Gastrocnemius medialis (tissue), 4 donors: ENCODE measurements at regions of chr1 and their contacts with region 1.

Region 1: DNA sequence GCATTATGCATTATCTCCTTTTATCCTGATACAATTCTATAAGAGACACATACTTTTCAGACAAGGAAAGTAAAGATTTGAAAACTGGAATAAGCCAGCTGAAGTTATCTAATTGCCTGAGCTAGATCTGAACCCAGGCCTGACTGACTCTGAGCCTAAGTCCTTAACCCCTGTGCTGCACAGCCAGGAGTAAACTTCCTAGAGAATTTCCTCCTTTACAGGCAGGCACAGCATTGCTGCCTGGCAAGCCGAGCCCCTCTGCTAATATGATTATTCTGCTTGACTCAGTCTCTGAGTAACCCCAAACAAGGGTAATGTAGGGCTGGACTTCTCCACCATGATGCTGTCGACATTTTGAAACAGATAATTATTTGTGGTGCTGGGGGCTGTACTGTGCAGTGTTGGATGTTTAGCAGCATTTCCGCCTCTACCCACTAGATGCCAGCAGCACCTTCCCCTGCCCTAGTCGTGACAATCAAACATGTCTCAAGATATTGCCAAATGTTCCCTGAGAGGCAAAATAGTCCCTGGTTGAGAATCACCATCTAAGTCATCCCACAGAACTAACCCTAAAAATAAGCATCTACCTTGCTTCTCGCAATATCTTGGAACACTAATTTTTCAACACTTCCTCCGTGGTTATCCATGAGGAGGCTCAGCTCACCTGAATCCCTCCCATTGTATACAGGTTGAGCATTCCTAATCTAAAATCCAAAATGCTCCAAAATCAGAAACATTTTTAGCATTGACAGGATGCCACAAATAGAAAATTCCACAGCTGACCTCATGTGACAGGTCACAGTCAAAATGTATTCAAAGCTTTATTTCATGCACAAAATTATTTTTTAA is 18.5 kb downstream of the CAMK1G start:
- DNase-seq: peak; percentile 37 to 52
- ATAC-seq: peak; percentile 98 to 99
- H3K4me3 ChIP-seq: no peak overlapping the region
- H3K27ac ChIP-seq: no peak overlapping the region
- H3K4me1 ChIP-seq: no peaks in the 10 kb centered on the region
- H3K27me3 ChIP-seq: no peaks in the 10 kb centered on the region
- CTCF ChIP-seq: peak; percentile 76 to 90 (median 83)
- POLR2A ChIP-seq: no peak

Region 2: DNA sequence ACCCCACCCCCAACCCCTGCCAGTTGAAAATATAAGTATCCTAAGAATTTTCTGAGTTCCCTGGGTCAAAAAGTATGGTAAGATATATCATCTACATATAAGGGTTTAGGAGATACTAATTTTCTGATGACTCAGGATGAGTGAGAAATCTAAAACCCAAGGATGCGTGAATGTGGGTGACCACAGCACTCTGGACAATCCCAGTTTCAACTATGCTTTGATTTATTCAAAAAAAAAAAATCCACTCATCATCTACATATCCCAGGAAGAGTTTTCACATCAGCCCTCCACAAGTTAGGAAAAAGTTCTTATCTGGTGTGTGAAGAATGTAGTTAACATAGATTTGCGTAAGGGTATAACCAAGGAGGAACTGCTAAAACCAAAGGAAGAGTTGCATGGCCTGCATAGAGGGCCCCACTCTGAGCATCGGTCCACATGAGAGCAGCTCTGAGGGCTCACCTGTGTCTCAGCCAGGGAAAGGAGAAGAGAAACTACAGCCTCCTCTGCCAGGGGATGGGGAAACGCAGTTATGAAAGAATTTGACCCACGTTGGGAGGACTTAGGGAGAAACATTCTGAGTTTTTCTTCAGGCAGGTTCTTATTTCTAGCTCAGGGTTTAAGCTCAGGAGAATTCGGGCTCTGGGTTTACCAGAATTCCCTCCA is 31.4 kb after region 1 on chr1:
- in situ Hi-C with region 1: loop called in 1 of 4 experiments (anchors 5 kb)
- intact Hi-C with region 1: no loop called
- DNase-seq: no peak
- ATAC-seq: no peak
- H3K4me3 ChIP-seq: no peak overlapping the region
- H3K27ac ChIP-seq: no peak overlapping the region
- H3K4me1 ChIP-seq: peaks cover 25 to 38% of the 10 kb centered on the region in 2 donors
- H3K27me3 ChIP-seq: no peaks in the 10 kb centered on the region
- CTCF ChIP-seq: no peak
- POLR2A ChIP-seq: no peak

Region 3: DNA sequence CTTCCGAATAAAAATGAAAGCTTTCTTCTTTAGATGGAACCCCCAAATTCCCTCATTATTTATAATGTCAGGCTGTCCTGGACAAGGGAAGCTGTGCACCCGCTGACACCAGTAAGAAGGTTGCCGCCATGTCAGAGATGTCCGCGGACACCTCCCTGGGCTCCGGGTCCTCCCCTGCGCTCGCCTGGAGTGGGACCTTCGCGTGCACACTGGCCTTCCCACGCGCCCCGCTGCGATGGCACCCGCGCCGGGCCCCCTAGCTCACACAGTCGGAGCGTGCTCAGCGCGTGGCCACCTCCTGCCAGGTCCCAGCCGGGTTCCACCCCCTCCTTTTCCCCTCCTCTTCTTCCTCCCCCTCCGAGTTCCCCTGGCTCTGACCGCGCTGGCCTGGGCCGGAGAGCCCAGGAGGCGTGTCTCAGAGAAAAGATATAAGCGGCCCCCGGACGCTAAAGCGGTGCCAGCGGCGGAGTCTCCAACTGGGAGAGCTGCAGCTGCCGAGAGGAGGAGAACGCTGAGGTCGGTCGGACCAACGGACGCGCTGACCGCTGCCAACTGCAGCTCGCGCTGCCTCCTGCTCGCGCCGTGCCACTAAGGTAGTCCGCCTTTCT is 73.0 kb after region 1 on chr1 and contains the start of gene G0S2:
- in situ Hi-C with region 1: no loop called
- intact Hi-C with region 1: no loop called
- DNase-seq: peak; percentile 77 to 96
- ATAC-seq: peak; percentile 49 to 67
- H3K4me3 ChIP-seq: peak within 1 kb of the TSS; percentile 69 to 78 (median 73)
- H3K27ac ChIP-seq: peak within 1 kb of the TSS; percentile 95 to 96 (median 95)
- H3K4me1 ChIP-seq: peaks cover 58 to 59% of the 10 kb centered on the region in 2 donors
- H3K27me3 ChIP-seq: no peaks in the 10 kb centered on the region
- CTCF ChIP-seq: no peak
- POLR2A ChIP-seq: peak; percentile 81 to 95
- total RNA-seq, gene G0S2: 29.1 to 1,155 (median 83.4) TPM